Stomach (tissue), 19 donors: ENCODE measurements at regions of chr7 and their contacts with region 1.

Region 1: DNA sequence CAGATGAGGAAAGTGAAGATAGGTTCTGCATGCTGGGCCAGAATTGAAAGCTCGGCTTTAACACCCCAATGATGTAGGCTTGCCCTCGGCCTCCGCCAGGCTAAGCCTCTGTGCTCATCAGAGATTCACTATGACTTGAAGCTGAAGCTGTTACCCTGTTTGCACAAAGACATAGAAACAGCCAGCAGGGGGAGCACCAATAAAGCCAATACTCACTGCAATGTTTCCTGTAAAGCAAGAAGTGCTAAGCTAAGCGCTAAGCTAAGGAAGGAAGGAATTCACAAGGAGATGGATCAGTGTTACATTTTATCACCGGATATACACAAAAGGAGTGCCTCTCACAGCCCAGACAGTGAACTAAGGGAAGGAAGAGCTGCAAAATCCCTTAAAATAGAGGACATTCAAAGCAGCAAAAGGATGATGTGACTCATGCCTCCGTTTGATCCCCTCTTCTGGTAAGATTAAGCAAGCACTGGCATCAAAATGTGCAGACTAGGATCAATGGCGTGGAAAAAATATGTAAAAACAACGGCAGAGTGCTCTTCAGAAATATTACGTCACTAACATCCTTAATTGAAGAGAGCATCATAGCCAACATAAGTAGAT is 153.8 kb downstream of the COBL start:
- DNase-seq: peak; percentile 81 to 94
- H3K4me3 ChIP-seq: no peak overlapping the region
- H3K27ac ChIP-seq: no peak overlapping the region
- H3K4me1 ChIP-seq: peaks cover 0 to 19% (median 11%) of the 10 kb centered on the region in 4 donors
- H3K27me3 ChIP-seq: no peaks in the 10 kb centered on the region
- CTCF ChIP-seq: peak in 5 of 7 experiments; percentile 53 to 83 (median 78)
- EP300 ChIP-seq: no peak
- POLR2A ChIP-seq: no peak

Region 2: GRCh38 chr7:50467817-50468610 is 694.8 kb before region 1 on chr7:
- intact Hi-C with region 1: loop called (anchors 5 kb)
- DNase-seq: peak; percentile 87 to 92
- H3K4me3 ChIP-seq: peak overlapping the region in 2 of 4 donors; percentile 13 to 35
- H3K27ac ChIP-seq: no peak overlapping the region
- H3K4me1 ChIP-seq: peaks cover 6 to 11% (median 8%) of the 10 kb centered on the region in 4 donors
- H3K27me3 ChIP-seq: no peaks in the 10 kb centered on the region
- CTCF ChIP-seq: peak in 5 of 7 experiments; percentile 76 to 90 (median 85)
- EP300 ChIP-seq: no peak
- POLR2A ChIP-seq: no peak

Region 3: GRCh38 chr7:51139796-51140195 is 23.0 kb before region 1 on chr7:
- intact Hi-C with region 1: no loop called
- DNase-seq: no peak
- H3K4me3 ChIP-seq: no peak overlapping the region
- H3K27ac ChIP-seq: no peak overlapping the region
- H3K4me1 ChIP-seq: peaks cover 0 to 17% (median 6%) of the 10 kb centered on the region in 4 donors
- H3K27me3 ChIP-seq: no peaks in the 10 kb centered on the region
- CTCF ChIP-seq: no peak
- EP300 ChIP-seq: no peak
- POLR2A ChIP-seq: no peak

Region 4: DNA sequence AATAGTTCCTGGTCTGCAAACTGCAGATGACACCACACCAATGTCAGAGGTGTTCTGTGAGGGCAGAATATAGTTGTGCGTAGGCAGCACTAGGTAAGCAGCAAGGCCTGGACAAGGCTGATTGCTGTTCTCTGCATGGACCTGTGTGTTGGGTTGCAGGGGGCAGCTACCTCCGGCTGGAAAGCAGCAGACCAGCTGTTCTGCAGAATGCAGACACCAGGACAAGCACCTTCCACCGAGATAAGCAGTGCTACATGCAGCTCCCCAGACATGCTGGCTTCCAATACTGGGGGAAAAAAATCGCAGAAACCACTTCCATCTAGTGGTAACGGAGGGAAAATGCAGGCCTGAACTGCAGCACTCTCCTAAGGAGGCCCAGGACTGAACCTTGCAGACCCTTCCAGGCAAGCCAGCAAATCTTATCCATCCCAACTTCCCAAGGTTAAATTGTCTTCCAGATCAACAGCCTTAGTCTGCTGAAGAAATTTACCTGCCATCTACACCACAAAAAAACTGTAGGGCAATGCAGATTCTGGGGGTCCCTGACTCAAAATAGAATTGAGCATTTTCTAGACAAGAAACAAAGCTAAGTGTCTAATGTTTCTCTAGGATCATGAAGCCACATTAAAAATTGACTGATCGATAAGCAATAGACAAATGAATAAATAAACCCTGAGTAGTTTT is 204.2 kb after region 1 on chr7:
- intact Hi-C with region 1: loop called (anchors 5 kb)
- DNase-seq: peak; percentile 54 to 82
- H3K4me3 ChIP-seq: no peak overlapping the region
- H3K27ac ChIP-seq: no peak overlapping the region
- H3K4me1 ChIP-seq: peaks cover 0 to 4% (median 0%) of the 10 kb centered on the region in 4 donors
- H3K27me3 ChIP-seq: no peaks in the 10 kb centered on the region
- CTCF ChIP-seq: peak in 5 of 7 experiments; percentile 60 to 92 (median 81)
- EP300 ChIP-seq: no peak
- POLR2A ChIP-seq: no peak

Region 5: DNA sequence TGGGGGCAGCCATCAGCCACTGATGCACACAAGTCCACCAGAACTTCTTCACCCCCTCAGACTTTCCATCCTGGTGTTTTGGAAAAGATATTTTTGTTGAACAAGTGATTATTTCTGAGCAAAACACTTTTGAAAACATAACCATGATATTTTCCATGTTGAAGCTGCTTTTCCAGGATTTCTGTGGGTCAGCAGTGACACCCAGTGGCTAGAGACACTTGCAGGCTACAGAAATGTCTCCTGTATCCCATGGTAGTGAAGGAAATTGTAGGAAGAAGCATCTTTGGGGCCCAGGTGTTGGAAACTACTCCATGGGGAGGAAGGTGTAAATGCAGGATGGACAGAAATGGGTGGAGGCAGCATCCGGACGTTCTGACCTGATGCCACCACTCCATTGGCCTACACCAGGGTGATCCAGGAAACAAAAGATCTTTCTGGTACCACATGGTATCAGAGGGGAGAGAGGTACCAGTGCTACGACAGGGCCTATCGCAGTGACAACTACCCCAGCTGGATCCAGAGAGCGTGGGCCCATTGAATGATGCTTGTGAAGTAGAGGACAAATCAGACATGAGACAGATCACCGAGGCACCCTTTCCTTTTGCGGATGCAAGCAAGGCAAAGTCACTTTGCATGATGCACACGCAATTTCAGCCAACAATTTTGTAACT is 265.5 kb after region 1 on chr7:
- intact Hi-C with region 1: no loop called
- DNase-seq: peak in 1 of 2 donors; percentile 28
- H3K4me3 ChIP-seq: no peak overlapping the region
- H3K27ac ChIP-seq: no peak overlapping the region
- H3K4me1 ChIP-seq: peaks cover 0 to 6% (median 2%) of the 10 kb centered on the region in 4 donors
- H3K27me3 ChIP-seq: peaks cover 0 to 9% (median 6%) of the 10 kb centered on the region in 3 donors
- CTCF ChIP-seq: no peak
- EP300 ChIP-seq: no peak
- POLR2A ChIP-seq: no peak